ENCODE measurements at regions of chr10 and their contacts with region 1.

Region 1: DNA sequence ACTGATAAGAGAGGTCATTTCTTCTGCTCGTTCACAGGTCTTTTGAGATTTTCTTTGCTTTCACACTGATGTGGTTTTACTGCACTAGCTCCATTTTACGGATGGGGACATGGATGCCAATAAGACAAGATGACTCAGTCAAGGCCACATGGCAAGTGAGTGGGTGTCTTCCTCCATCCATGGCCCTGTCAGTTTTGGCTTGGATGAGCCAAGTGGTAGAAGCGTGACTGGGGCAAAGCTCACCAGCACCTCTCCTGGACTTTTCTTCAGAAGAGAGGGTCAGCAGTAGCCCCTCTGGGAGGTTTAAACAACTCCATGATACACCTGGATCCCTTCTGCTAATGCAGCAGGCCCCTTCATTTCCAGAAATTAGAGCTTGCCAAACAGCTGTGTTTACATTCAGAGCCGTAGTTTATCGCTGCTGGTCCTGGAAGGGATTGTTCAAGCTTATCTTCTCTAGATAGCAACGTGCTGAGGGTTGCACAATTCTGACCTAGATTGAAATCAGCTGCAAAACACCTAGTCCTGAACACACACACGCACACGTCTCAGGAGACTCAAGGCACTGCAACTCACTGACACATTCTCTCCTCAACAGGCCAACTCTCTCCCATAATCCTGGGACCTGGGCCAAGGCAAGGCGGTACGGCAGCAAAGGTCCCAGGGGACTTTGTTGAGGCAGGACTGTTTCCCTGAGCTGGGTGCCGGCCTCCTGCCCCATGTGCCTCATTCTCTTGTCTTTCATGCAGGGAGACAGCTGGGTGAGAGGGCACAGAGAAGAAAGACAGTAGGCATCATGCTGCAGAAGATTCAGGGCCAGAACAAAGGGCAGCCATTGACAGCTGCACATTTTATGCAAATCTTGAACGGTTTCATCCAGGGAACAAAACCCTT is 14.2 kb upstream of the PDCD4 start:
- DNase-seq: peak; percentile 66
- H3K4me3 Mint-ChIP-seq: peak overlapping the region; percentile 25
- H3K27ac Mint-ChIP-seq: peak overlapping the region; percentile 72
- H3K4me1 Mint-ChIP-seq: peaks cover 82% of the 10 kb centered on the region
- H3K27me3 Mint-ChIP-seq: no peaks in the 10 kb centered on the region

Region 2: GRCh38 chr10:109987452-109988211 is 869.9 kb before region 1 on chr10:
- CTCF ChIA-PET with region 1: no interaction called
- POLR2A ChIA-PET with region 1: no interaction called
- intact Hi-C with region 1: no loop called
- DNase-seq: no peak
- H3K4me3 Mint-ChIP-seq: no peak overlapping the region
- H3K27ac Mint-ChIP-seq: no peak overlapping the region
- H3K4me1 Mint-ChIP-seq: peaks cover 2% of the 10 kb centered on the region
- H3K27me3 Mint-ChIP-seq: no peaks in the 10 kb centered on the region

Region 3: GRCh38 chr10:110733218-110733952 is 124.1 kb before region 1 on chr10:
- CTCF ChIA-PET with region 1: no interaction called
- POLR2A ChIA-PET with region 1: no interaction called
- intact Hi-C with region 1: no loop called
- DNase-seq: no peak
- H3K4me3 Mint-ChIP-seq: peak overlapping the region; percentile 49
- H3K27ac Mint-ChIP-seq: no peak overlapping the region
- H3K4me1 Mint-ChIP-seq: peaks cover 9% of the 10 kb centered on the region
- H3K27me3 Mint-ChIP-seq: peaks cover 4% of the 10 kb centered on the region

Region 4: GRCh38 chr10:110893559-110894179 is 36.2 kb after region 1 on chr10:
- CTCF ChIA-PET with region 1: interaction called, 11 read pairs
- POLR2A ChIA-PET with region 1: no interaction called
- intact Hi-C with region 1: no loop called
- DNase-seq: no peak
- H3K4me3 Mint-ChIP-seq: no peak overlapping the region
- H3K27ac Mint-ChIP-seq: peak overlapping the region; percentile 4
- H3K4me1 Mint-ChIP-seq: peaks cover 47% of the 10 kb centered on the region
- H3K27me3 Mint-ChIP-seq: no peaks in the 10 kb centered on the region